Vagina (tissue), 2 donors: ENCODE measurements at regions of chr7 and their contacts with region 1.

Region 1: GRCh38 chr7:108497082-108497725 is 28.7 kb downstream of the PNPLA8 start:
- DNase-seq: no peak
- H3K4me3 ChIP-seq: no peak overlapping the region
- H3K27ac ChIP-seq: no peak overlapping the region
- H3K4me1 ChIP-seq: no peaks in the 10 kb centered on the region
- H3K27me3 ChIP-seq: no peaks in the 10 kb centered on the region
- CTCF ChIP-seq: peak; percentile 57 to 75 (median 61)
- POLR2A ChIP-seq: no peak

Region 2: DNA sequence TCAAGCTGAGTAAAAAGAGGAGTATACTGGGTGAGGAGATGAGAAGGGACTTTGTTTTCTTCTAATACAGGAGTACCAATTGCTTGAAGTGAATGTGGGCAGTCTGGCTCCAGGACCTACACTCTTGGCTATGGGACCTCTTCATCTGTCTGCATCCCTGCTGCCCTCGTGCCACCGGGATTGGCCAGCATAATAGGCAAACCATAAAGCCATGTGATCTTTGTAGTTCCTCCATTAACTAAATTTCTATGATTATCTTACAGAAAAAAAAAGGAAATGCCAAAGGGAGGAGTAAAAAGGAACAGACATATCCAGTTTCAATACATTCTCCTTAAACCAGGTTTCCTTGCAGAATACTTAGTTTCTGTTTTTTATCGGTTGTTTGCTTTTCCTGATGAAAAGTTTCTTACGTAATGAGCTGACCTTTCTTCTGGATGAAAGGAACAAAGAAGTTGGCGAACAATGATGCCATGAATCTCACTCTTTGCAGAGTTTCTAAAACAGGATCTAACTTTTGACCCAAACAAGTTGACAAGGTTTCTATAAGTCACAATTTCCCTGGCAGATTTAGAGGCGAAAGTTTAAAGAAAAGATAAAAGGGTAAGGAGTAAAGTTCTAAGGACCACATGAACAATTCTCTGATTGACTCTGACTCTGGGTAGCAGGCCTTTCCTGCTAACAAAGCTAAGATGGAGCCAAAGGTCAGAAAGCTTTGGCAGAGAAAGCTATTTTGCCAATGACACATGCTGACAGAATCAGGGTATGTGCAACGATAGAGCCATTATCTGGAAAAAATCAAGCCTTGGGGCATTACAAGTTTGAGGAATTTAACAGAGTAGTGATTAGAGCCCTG is 548.3 kb before region 1 on chr7:
- intact Hi-C with region 1: no loop called
- DNase-seq: no peak
- H3K4me3 ChIP-seq: no peak overlapping the region
- H3K27ac ChIP-seq: no peak overlapping the region
- H3K4me1 ChIP-seq: no peaks in the 10 kb centered on the region
- H3K27me3 ChIP-seq: no peaks in the 10 kb centered on the region
- CTCF ChIP-seq: no peak
- POLR2A ChIP-seq: no peak

Region 3: DNA sequence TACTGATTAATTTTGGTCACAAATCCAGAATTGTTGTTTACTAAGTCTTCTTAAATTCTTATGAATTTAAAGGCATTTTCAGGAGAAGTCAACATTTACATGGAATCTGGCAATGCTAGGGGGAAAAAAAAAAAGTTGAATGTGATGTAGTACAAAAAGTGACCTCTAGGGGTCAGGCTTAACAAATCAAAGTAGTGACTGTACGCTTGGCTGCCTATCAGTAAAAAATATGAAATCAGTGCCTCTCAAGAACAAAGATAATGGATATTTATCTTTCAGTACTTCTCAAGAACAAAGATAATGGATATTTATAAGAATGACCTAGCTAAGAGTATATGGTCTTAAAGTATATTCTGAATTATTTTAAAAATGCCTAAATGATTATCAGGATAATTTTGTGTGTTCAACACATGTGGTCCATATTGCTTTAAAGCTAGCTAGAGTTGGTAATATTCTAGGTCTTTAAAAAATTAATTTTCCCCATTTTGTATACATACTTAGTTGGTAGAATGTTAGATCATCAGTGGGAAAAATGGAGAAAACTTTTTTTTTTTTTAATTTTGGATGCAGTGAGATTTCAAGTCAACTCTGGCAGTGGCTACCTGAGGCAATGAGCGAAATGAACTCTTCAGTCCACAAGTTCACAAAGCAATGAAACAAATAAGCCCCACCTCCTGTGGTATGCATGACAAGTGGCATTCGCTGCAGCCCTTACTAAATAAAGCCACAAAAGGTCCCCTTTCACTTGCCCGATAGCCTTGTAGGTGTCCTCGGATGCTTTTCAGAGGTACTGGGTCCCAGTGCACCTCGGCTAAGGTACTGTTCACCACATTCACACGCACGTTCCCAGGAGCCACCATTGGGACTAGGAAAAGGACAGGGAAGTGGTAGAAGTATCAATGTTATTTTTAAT is 315.9 kb before region 1 on chr7:
- intact Hi-C with region 1: loop called (anchors 5 kb)
- DNase-seq: no peak
- H3K4me3 ChIP-seq: no peak overlapping the region
- H3K27ac ChIP-seq: no peak overlapping the region
- H3K4me1 ChIP-seq: no peaks in the 10 kb centered on the region
- H3K27me3 ChIP-seq: no peaks in the 10 kb centered on the region
- CTCF ChIP-seq: peak; percentile 33 to 55 (median 49)
- POLR2A ChIP-seq: no peak

Region 4: GRCh38 chr7:108468246-108468645 is 29.0 kb before region 1 on chr7:
- intact Hi-C with region 1: no loop called
- DNase-seq: no peak
- H3K4me3 ChIP-seq: no peak overlapping the region
- H3K27ac ChIP-seq: no peak overlapping the region
- H3K4me1 ChIP-seq: no peaks in the 10 kb centered on the region
- H3K27me3 ChIP-seq: no peaks in the 10 kb centered on the region
- CTCF ChIP-seq: no peak
- POLR2A ChIP-seq: no peak

Region 5: DNA sequence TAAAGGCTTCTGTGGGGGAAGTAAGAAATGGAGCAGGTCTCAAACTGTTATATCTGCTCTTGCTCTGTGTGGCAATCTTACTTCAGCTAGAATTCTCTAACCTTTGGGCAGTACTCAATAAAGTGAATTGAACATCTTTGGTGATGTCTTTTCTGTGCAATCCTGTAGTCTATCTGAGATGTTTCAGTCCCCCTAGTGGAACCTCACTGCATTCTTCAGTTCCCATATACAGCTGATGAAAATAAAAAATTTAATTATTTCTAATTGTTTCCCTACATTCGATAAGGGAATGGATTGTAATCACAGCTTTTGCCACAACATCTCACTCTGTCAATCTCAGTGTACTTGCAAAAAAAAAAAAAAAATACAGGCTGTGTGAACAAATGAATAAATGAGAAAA is 595.1 kb after region 1 on chr7:
- intact Hi-C with region 1: no loop called
- DNase-seq: no peak
- H3K4me3 ChIP-seq: no peak overlapping the region
- H3K27ac ChIP-seq: no peak overlapping the region
- H3K4me1 ChIP-seq: no peaks in the 10 kb centered on the region
- H3K27me3 ChIP-seq: no peaks in the 10 kb centered on the region
- CTCF ChIP-seq: no peak
- POLR2A ChIP-seq: no peak